AG04449 (cell line): ENCODE measurements at regions of chr11 and their contacts with region 1.

Region 1: GRCh38 chr11:9765320-9766020 is 101.6 kb downstream of the SWAP70 start:
- DNase-seq: peak; percentile 97
- H3K4me3 ChIP-seq: no peak overlapping the region
- CTCF ChIP-seq: no peak

Region 2: DNA sequence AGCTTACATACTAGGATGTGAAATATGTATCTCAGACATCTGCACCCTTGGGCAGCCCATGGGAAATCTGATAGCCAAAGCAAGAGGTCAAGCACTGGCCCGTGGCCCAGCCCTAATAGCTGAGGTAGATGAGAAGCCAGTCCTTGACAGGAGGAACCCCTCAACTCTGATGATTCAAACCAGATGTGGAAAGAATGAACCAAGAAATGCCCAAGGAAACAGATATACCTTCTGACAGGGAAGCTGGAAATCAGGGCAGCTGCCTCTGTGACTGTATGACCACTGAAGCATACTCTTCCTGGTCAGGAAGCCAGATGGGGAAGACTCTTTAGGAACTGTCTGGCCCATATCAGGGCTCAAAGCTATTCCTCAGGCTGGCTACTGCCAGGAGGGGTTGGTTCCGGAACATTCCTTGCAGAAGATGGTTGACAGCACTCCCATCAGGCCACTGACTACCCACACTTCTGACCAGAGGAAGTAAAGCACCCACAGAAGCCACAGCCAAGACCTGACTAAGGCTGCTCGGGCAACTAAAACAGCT is 22.6 kb after region 1 on chr11:
- CTCF ChIA-PET with region 1: interaction called, 3 read pairs
- POLR2A ChIA-PET with region 1: interaction called, 32 read pairs
- DNase-seq: peak; percentile 55
- H3K4me3 ChIP-seq: no peak overlapping the region
- CTCF ChIP-seq: no peak

Region 3: DNA sequence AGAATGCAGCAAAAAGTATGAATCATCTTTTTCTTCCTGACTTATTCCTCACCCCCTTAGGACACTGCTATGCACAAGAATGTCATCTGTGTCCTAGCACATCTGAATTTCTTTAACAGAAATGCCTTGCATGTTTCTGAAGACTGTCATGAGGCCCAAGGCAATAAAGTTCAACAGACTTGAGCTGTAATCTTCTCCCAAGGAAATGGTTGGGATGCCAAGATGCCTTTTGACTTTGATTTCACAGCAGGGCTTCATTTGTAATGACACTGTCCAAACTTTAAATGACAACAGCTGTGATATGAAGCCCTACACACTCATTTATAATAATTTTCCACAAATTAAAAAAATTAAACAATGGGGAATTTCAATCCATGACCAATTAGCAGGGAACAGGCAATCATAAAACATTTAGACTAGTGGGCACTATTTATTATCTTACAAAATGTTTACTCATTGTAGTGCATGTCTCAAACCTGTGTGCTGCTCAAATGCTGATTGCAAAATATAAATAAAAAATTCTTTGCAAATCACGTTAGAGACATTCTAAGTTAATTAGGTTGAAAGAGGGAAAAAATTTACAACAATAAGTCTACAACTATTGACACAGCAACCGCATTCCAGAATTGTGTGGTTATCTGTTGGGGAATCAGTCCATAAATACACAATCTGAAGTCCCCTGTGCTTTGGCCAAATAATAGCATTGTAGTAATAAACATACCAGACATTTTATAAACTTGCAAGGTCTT is 140.7 kb after region 1 on chr11:
- CTCF ChIA-PET with region 1: interaction called, 3 read pairs
- POLR2A ChIA-PET with region 1: interaction called, 25 read pairs
- DNase-seq: peak; percentile 96
- H3K4me3 ChIP-seq: no peak overlapping the region
- CTCF ChIP-seq: no peak